PC-9 (cell line): ENCODE measurements at regions of chr3 and their contacts with region 1.

Region 1: DNA sequence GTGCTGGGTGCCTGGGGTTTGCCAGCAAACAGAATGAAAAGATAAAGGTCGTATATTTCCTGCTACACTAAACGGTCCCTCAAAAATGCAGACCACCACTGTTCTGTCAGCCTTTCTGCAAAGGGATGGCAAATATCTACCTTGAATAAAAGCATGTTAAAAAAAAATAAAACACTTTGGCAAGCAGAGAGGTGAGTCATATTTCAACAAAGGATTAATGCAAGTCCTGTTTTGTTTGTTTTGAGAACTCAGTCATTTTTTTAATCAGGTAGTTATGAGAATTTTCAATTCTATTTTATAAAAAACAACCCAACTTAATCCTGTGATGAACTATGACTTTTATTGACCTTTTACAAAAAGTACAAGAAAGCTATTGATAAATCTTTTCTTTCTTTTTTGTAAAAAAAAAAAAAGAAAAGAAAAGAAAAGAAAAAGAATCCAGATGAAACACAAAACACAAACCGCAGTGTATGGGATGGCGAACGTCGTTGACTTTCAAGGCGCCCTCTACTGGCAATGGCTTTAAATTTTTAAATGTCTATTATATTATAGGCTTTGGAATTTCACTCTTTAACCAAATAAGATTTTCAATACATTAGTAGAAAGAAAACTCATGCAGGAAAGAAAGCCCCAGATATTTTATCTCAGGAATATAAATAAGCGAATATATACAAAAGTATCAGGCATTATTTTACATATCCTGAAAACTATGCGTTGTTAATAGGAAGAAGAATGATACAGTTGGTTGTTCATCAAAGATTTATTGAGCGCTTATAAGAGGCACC is 87.8 kb downstream of the NCEH1 start:
- DNase-seq: peak; percentile 46 to 87
- H3K4me3 ChIP-seq: peak overlapping the region; percentile 30; the same call in 1 of the 2 replicates
- H3K27ac ChIP-seq: peak overlapping the region; percentile 38; the same call in 1 of the 2 replicates
- H3K4me1 ChIP-seq: peaks cover 37% of the 10 kb centered on the region
- H3K27me3 ChIP-seq: no peaks in the 10 kb centered on the region
- CTCF ChIP-seq: peak; percentile 95

Region 2: GRCh38 chr3:172239218-172239790 is 383.8 kb before region 1 on chr3:
- CTCF ChIA-PET with region 1: no interaction called
- POLR2A ChIA-PET with region 1: no interaction called
- intact Hi-C with region 1: no loop called
- DNase-seq: no peak
- H3K4me3 ChIP-seq: no peak overlapping the region
- H3K27ac ChIP-seq: peak overlapping the region; percentile 13; the same call in 1 of the 2 replicates
- H3K4me1 ChIP-seq: peaks cover 13% of the 10 kb centered on the region
- H3K27me3 ChIP-seq: no peaks in the 10 kb centered on the region
- CTCF ChIP-seq: no peak

Region 3: GRCh38 chr3:172550347-172550943 is 72.7 kb before region 1 on chr3:
- CTCF ChIA-PET with region 1: interaction called, 9 read pairs
- POLR2A ChIA-PET with region 1: no interaction called
- intact Hi-C with region 1: loop called (anchors 2 kb)
- DNase-seq: peak; percentile 79 to 88
- H3K4me3 ChIP-seq: no peak overlapping the region
- H3K27ac ChIP-seq: no peak overlapping the region
- H3K4me1 ChIP-seq: peaks cover 50% of the 10 kb centered on the region
- H3K27me3 ChIP-seq: no peaks in the 10 kb centered on the region
- CTCF ChIP-seq: no peak

Region 4: DNA sequence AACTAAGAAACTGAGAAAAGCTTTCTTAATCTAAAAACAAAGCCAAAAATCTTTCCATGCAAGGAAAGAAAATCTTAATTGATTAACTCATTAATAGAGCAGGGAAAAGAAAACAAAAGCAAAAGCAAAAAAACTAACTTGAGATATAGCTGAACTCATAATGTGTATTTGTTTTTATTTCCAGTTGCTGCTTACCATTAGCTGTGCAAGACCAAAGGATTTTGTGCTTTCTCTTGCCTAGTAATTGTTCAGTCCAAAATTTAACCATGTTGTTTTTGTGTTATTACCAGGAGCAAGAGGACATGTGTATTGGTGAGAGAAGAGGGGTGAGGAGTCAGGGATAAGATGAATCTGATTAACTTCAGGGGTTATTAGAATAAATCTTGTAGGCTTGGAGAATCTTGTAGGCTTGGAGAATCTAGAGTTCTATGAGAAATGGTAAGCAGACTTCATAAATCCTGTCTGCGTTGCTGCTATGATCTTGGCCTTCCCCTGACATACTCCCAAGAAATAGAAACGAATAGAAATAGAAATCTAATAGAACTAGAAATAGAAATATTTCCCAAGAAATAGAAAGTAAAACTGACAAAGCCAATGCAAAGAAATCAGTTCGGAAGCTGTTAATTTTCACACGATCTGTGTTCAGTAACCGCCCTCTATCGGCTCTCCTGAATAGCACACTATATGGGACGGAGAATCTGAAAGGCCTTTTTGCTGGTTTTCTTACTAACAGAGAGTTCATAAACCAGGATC is 27.3 kb before region 1 on chr3:
- CTCF ChIA-PET with region 1: no interaction called
- POLR2A ChIA-PET with region 1: no interaction called
- intact Hi-C with region 1: no loop called
- DNase-seq: peak; percentile 32 to 65
- H3K4me3 ChIP-seq: peak overlapping the region; percentile 25; the same call in 1 of the 2 replicates
- H3K27ac ChIP-seq: no peak overlapping the region
- H3K4me1 ChIP-seq: peaks cover 8% of the 10 kb centered on the region; the same call in 1 of the 2 replicates
- H3K27me3 ChIP-seq: no peaks in the 10 kb centered on the region
- CTCF ChIP-seq: peak; percentile 96

Region 5: DNA sequence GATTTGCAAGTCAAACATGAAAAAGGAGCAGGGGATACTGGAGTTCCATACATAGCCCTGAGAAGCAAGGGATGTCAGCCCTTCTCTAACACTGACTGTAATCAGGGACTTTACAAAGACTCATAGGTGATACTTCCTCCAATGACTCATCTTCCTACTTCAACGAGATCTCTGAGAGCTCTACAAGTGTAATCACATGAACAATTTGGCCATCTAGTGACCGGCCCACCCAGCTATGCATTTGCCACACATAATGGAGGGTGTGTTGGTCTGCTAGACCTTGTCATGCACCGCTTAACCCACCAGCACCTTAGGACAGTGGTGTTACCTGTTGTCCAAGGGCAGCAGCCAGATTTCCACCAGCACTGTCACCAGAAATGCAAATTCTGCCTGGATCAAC is 12.5 kb after region 1 on chr3:
- CTCF ChIA-PET with region 1: interaction called, 9 read pairs
- POLR2A ChIA-PET with region 1: no interaction called
- intact Hi-C with region 1: loop called (anchors 2 kb)
- DNase-seq: peak; percentile 71 to 86
- H3K4me3 ChIP-seq: no peak overlapping the region
- H3K27ac ChIP-seq: peak overlapping the region; percentile 54
- H3K4me1 ChIP-seq: peaks cover 37% of the 10 kb centered on the region
- H3K27me3 ChIP-seq: no peaks in the 10 kb centered on the region
- CTCF ChIP-seq: no peak

Region 6: DNA sequence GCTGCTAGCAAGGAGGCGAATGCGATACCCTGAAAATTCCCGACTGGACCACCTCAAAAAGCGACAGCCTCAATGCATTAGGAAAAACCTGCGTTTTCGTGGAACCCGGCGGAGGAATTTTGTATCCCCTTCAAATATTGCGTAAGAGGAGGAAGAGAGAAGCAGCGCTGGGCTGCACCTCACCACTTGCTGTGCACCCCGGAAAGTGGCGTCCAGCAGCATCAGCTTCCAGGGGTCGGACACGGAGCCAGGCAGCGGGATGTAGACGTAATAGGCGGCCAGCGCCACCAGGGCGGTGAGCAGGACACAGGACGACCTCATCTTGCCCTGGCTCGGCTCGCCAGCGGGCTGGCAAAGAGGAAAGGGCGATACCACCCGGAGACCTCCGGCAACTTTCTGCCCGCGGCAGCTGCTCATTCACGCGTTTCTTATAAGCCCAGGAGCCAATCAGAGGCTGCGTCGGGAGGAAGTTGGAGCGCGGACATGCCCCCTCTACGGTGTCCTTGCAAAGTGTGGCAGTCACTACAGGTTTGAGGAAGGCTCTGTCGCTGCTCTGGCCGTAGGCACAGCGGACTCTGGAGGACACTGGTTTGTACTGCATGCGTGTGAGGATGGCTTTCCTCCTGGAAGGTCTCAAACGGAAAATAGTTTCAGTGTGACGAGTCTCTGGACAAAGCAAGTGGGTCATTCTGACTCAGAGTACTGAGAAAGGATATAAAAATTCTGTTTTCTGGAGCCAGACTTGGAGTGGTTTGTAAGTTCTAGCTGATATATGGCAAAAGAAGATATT is 87.8 kb after region 1 on chr3 and contains the start of gene NCEH1:
- CTCF ChIA-PET with region 1: interaction called, 4 read pairs
- POLR2A ChIA-PET with region 1: no interaction called
- intact Hi-C with region 1: loop called (anchors 1 kb)
- DNase-seq: peak; percentile 98 to 100
- H3K4me3 ChIP-seq: peak within 1 kb of the TSS; percentile 83
- H3K27ac ChIP-seq: peak within 1 kb of the TSS; percentile 98
- H3K4me1 ChIP-seq: peaks cover 62% of the 10 kb centered on the region
- H3K27me3 ChIP-seq: no peaks in the 10 kb centered on the region
- CTCF ChIP-seq: peak; percentile 89
- total RNA-seq, gene NCEH1: 39.6 and 43.5 TPM in 2 replicates

Region 7: DNA sequence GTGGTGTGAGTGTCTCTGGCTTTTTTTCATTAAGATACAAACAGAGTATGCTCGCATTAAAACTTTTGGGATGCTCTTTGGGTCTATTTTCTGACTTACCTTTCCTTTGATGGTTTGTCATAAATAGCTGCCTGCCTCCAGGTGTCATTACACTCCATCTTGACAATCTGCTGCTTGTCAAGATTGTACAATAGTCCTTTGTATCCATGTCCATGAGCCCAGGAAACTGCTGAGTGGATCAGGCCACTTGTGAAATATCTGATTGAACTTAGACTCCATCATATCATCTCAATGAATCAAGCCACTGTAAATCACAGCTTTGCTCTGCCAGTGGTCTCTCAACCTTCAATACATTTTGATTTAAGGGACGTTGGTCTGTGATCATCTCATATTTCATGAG is 262.6 kb after region 1 on chr3:
- CTCF ChIA-PET with region 1: no interaction called
- POLR2A ChIA-PET with region 1: no interaction called
- intact Hi-C with region 1: no loop called
- DNase-seq: no peak
- H3K4me3 ChIP-seq: no peak overlapping the region
- H3K27ac ChIP-seq: no peak overlapping the region
- H3K4me1 ChIP-seq: no peaks in the 10 kb centered on the region
- H3K27me3 ChIP-seq: no peaks in the 10 kb centered on the region
- CTCF ChIP-seq: no peak